Pancreas (tissue), 10 donors: ENCODE measurements at regions of chr2 and their contacts with region 1.

Region 1: DNA sequence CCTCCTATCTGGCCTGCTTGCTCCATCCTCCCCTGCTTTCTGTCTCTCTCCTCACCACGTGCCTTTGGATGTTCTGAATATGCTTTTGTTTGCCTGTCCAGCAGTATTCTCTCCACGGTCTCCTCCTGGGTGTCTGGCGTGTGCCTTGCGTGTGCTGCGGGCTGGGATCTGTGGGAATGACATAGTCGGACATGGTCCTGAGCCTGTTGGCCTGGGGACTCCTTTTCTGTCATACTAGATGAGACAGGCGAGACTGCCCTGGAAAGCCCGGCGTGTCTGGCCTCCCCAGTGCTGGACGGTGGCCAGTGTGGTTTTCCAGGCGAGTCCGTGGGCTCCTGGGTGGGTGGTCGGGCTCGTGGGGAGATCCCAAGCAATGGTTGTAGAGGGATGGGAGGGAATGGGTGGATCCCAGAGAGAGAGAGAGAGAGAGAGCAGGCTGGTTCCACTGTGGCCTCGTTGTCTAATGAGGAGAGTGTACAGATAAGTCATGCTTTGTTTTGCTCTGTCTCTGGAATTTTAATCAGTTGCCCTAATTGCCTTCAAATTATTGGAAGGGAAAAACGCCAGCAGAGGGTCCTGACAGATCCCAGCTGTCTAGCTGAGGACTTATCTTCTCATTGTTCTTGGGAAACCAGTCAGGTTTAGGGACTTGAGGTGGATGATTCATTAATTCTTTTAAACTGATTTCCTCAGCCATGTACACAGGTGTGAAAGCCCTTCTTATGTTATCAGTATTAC is 58.3 kb downstream of the HPCAL1 start:
- DNase-seq: no peak
- ATAC-seq: no peak
- H3K4me3 ChIP-seq: no peak overlapping the region
- H3K27ac ChIP-seq: peak overlapping the region in 3 of 4 donors; percentile 22 to 33 (median 28)
- H3K4me1 ChIP-seq: peaks cover 33 to 45% (median 36%) of the 10 kb centered on the region in 3 donors
- H3K27me3 ChIP-seq: no peaks in the 10 kb centered on the region
- CTCF ChIP-seq: no peak

Region 2: GRCh38 chr2:10220902-10221391 is 140.1 kb before region 1 on chr2:
- intact Hi-C with region 1: no loop called
- DNase-seq: peak in 1 of 6 donors; percentile 45
- ATAC-seq: no peak
- H3K4me3 ChIP-seq: no peak overlapping the region
- H3K27ac ChIP-seq: no peak overlapping the region
- H3K4me1 ChIP-seq: no peaks in the 10 kb centered on the region
- H3K27me3 ChIP-seq: no peaks in the 10 kb centered on the region
- CTCF ChIP-seq: no peak

Region 3: DNA sequence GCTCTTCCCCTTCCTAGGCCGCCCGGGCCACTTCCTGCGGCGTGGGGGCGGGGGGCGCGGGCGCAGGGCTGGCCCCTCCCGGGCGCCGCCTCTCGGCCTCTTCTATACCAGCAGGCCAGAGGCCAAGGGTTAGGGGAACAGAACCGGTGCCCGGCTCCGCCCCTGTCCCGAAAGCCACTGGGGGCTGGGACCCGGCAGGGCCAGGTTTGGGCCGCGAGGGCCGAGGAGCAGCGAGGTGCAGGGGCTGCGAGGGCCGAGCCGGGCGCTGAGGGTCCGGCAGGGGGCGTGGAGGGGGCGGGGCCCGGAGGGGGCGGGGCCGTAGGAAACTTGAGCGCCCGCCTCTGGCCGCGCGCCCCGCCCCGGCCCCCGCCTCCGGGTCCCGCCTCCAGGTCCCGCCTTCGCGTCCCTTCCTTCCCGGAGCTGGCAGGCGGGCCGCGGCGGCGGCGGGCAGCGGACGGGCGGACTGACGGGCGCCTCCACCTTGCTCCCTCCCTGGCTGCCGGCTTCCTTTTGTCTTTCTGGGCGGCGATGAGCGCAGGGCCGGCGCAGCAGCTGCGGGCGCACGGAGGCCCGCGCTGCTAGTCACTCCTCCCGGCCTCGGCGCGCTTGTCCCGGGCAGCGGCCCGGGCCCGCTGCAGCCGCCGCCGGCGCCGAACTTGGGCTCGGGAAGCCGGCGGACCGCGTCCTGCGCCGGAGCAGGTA is 58.4 kb before region 1 on chr2 and contains the start of gene HPCAL1:
- intact Hi-C with region 1: loop called in 1 of 3 experiments (anchors 10 kb)
- DNase-seq: peak; percentile 87 to 96 (median 92)
- ATAC-seq: peak; percentile 84 to 92 (median 86)
- H3K4me3 ChIP-seq: peak within 1 kb of the TSS; percentile 83 to 99 (median 88)
- H3K27ac ChIP-seq: peak within 1 kb of the TSS; percentile 61 to 84 (median 72)
- H3K4me1 ChIP-seq: peaks cover 8 to 19% (median 15%) of the 10 kb centered on the region in 3 donors
- H3K27me3 ChIP-seq: no peaks in the 10 kb centered on the region
- CTCF ChIP-seq: peak; percentile 36 to 56 (median 44)
- total RNA-seq, gene HPCAL1: 24.3 to 32.7 (median 26.8) TPM